ENCODE measurements at regions of chr11 and their contacts with region 1.

Region 1: DNA sequence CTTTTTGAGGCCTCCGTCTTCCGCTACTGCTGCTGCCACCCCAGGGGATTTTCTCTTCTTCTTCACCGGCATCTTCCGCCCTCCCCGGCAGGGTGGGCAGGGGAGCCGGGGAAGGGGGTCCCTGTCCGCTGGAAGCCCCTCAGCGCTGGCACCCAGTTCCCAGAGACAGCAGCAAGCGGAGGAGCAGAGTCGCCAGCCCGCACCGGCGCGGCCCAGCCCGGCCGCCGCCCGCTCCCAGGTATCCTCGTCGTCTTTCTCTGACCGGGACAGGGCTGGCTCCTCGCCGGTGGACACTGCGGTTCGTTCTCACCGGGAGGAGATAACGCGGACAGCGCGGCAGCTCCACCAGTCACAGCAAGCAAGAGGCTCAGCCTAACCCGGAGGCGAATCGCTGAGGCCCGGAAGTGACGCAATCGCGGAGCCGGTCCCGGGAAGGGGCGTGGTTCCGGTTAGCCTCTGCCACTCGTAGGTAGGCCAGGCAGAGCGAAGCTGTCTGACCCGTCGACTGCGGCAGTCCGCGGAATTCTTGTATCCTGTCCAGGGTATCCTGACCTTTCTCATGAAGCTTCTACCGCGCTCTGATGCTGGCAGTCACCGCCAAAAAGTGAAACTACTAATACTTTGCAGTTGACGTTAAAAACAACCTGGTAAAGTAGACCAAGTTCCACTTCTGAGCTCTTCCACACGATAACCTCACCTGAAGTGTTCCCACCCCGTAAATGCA is at the start of gene DCUN1D5:
- DNase-seq: peak; percentile 96
- H3K4me3 ChIP-seq: peak within 1 kb of the TSS; percentile 84 to 94 (median 90)
- H3K27ac ChIP-seq: peak within 1 kb of the TSS; percentile 92
- H3K4me1 ChIP-seq: peaks cover 18% of the 10 kb centered on the region
- H3K27me3 ChIP-seq: no peaks in the 10 kb centered on the region
- CTCF ChIP-seq: no peak
- total RNA-seq, gene DCUN1D5: 66.1 to 71.2 TPM

Region 2: GRCh38 chr11:103108933-103109817 is 17.2 kb after region 1 on chr11 and contains the start of gene DYNC2H1:
- CTCF ChIA-PET with region 1: interaction called, 8 read pairs
- dilution Hi-C with region 1: no loop called
- in situ Hi-C with region 1: no loop called
- intact Hi-C with region 1: loop called (anchors 1 kb)
- DNase-seq: peak; percentile 94
- H3K4me3 ChIP-seq: peak within 1 kb of the TSS; percentile 84 to 98 (median 85)
- H3K27ac ChIP-seq: peak within 1 kb of the TSS; percentile 96
- H3K4me1 ChIP-seq: peaks cover 17% of the 10 kb centered on the region
- H3K27me3 ChIP-seq: no peaks in the 10 kb centered on the region
- CTCF ChIP-seq: peak; percentile 27 to 62
- total RNA-seq, gene DYNC2H1: 32.5 to 38.3 TPM